Endothelial cell of umbilical vein (primary cell): ENCODE measurements at regions of chr21 and their contacts with region 1.

Region 1: DNA sequence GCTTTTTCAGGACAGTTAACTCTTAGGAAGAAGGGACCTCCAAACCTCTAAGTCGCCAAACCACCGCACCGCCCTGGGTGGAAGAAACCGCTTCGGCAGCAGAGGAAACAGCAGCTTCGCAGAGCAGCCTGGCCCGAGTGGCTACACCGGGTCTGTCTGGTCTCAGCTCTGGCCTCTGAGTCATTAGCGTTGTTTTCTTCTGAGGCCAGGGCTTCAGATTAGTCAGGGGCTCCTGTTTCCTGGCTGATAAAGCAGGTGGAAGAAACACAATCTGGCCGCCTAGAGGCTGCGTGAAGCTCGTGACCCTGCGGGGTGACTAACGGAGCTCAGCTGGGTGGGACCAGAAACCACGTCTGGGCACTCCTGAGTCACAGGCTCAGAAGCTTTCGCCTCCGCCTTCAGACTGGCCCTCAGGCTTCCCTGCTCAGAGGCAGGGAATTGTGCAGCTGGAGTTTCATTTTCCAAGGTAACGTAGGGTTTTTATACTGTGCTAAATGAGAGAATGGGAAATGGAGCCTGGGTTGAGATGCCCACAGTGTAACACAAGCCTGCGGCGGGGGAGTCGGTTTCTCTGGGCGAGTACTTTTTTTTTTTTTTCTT is 44.9 kb downstream of the CHAF1B start:
- DNase-seq: peak; percentile 100
- H3K4me3 ChIP-seq: peak overlapping the region; percentile 52 to 91 (median 70)
- H3K27ac ChIP-seq: peak overlapping the region; percentile 98
- H3K4me1 ChIP-seq: peaks cover 45% of the 10 kb centered on the region
- H3K27me3 ChIP-seq: no peaks in the 10 kb centered on the region
- CTCF ChIP-seq: peak in 1 of 2 donors; percentile 28
- POLR2A ChIP-seq: peak; percentile 99

Region 2: GRCh38 chr21:36450511-36450910 is 20.5 kb after region 1 on chr21:
- CTCF ChIA-PET with region 1: interaction called, 19 read pairs
- POLR2A ChIA-PET with region 1: interaction called, 15 read pairs
- dilution Hi-C with region 1: no loop called
- intact Hi-C with region 1: no loop called
- DNase-seq: peak; percentile 57
- H3K4me3 ChIP-seq: no peak overlapping the region
- H3K27ac ChIP-seq: peak overlapping the region; percentile 61
- H3K4me1 ChIP-seq: peaks cover 32% of the 10 kb centered on the region
- H3K27me3 ChIP-seq: no peaks in the 10 kb centered on the region
- CTCF ChIP-seq: no peak
- POLR2A ChIP-seq: no peak

Region 3: DNA sequence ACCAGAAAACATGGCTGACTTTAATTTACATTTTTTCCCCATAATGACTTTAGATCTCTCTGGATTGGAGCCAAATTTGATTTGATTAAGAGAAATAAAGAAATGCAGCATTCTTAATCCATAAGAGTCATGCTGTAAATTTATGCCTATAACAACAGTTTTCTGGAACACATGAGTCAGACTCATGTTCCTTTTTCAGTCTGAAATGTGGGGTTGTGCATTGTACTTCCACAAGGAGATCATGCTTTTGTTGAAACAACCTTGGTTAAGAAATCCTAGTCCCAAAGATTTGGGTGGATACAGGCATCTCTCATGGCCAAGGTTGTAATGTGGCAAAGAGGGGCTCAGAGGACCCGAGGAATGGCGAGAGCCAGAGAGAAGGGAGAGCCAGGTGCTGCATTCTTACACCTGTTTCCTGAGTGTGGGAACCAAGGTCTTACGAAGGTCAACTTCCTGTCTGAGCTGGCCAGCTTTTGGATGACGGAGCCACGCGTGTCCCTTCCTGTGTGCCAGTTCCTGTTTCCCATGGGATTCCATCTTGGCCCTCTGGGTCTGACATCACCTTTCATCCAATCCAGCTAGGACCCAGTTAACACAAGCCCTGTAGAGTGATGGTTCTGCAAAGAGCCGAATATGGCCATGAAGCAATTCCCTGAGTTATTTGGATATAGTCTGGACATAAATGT is 26.8 kb after region 1 on chr21:
- CTCF ChIA-PET with region 1: interaction called, 19 read pairs
- POLR2A ChIA-PET with region 1: interaction called, 15 read pairs
- dilution Hi-C with region 1: no loop called
- intact Hi-C with region 1: loop called (anchors 1 kb)
- DNase-seq: peak; percentile 98
- H3K4me3 ChIP-seq: no peak overlapping the region
- H3K27ac ChIP-seq: peak overlapping the region; percentile 97
- H3K4me1 ChIP-seq: peaks cover 47% of the 10 kb centered on the region
- H3K27me3 ChIP-seq: no peaks in the 10 kb centered on the region
- CTCF ChIP-seq: no peak
- POLR2A ChIP-seq: peak; percentile 70

Region 4: GRCh38 chr21:36478207-36478701 is 48.2 kb after region 1 on chr21:
- CTCF ChIA-PET with region 1: interaction called, 18 read pairs
- POLR2A ChIA-PET with region 1: interaction called, 22 read pairs
- dilution Hi-C with region 1: no loop called
- intact Hi-C with region 1: loop called (anchors 1 kb)
- DNase-seq: peak; percentile 85
- H3K4me3 ChIP-seq: no peak overlapping the region
- H3K27ac ChIP-seq: peak overlapping the region; percentile 98
- H3K4me1 ChIP-seq: peaks cover 30% of the 10 kb centered on the region
- H3K27me3 ChIP-seq: no peaks in the 10 kb centered on the region
- CTCF ChIP-seq: no peak
- POLR2A ChIP-seq: peak; percentile 32

Region 5: DNA sequence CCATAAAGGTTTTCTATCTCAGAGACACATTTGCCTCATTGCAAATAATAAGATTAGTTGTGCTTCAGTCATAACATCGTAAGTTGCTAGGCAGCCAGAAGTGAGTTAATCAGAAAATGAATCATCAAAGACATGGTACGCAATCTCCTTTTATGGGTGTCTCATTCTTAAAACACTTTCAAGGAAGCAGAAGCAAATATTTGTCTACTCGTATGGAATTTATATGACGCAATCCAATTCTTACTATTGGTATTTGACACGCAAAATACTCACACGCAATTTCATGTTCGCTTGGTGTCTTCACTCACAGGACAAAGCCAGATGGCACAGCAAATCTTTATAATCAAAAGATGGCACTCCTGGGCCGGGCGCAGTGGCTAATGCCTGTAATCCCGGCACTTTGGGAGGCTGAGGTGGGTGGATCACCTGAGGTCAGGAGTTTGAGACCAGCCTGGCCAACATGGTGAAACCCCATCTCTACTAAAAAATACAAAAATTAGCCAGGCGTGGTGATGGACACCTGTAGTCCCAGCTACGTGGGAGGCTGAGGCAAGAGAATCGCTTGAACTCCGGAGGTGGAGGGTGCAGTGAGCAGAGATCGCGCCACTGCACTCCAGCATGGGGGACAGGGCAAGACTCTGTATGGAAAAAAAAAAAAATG is 480.0 kb after region 1 on chr21:
- CTCF ChIA-PET with region 1: no interaction called
- POLR2A ChIA-PET with region 1: no interaction called
- dilution Hi-C with region 1: no loop called
- intact Hi-C with region 1: loop called (anchors 1 kb)
- DNase-seq: peak; percentile 86
- H3K4me3 ChIP-seq: no peak overlapping the region
- H3K27ac ChIP-seq: peak overlapping the region; percentile 99
- H3K4me1 ChIP-seq: peaks cover 6% of the 10 kb centered on the region
- H3K27me3 ChIP-seq: no peaks in the 10 kb centered on the region
- CTCF ChIP-seq: no peak
- POLR2A ChIP-seq: no peak